Left colon (tissue), 2 donors: ENCODE measurements at regions of chr17 and their contacts with region 1.

Region 1: DNA sequence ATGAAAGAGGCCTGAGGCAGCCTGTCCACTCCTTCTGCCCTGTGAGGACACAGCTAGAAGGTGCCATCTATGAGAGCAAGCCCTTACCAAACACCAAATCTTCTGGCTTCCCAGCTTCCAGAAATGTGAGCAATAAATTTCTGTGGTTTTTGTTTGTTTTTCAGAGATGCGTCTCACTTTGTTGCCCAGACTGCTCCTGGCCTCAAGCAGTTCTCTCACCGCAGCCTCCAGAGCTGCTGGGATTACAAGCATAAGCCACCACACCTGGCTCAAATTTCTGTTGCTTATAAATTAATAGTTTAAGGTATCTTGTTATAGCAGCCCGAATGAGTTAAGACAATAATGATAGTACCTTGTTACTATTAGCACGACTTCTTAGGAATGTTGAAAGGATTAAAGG is 12.5 kb upstream of the SLC16A11 start:
- DNase-seq: no peak
- ATAC-seq: no peak

Region 2: DNA sequence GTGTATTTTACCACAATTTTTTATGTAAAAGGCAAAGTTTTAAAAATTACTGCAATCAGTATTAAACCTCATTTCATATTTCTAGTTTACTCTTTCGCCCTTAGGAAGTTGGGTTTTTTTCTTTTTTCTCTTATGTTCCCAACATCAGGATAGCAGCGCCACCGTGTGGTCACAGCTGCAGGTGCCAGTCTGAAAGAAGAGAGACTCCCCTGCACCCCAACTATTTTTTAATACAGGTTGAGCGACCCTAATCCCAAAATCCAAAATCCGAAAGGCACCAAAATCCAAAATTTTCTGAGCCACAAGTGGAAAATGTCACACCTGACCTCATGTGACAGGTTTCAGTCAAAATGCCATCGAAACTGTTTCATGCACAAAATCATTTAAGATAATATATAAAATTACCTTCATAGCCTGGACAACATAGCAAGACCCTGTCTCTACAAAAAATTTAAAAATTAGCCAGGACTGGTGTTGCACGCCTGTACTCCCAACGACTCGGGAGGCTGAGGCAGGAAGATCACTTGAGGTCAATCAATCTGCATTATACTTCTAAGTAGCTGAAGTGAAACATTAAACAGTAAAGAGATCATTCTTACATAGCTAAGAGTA is 80.0 kb after region 1 on chr17:
- intact Hi-C with region 1: loop called (anchors 2 to 5 kb)
- DNase-seq: peak in 1 of 2 donors; percentile 91
- ATAC-seq: no peak